ENCODE measurements at regions of chr10 and their contacts with region 1.

Region 1: GRCh38 chr10:129982825-129983224 is 18.8 kb upstream of the EBF3 start:
- H3K4me3 ChIP-seq: no peak overlapping the region
- H3K27ac ChIP-seq: no peak overlapping the region
- H3K4me1 ChIP-seq: no peaks in the 10 kb centered on the region
- CTCF ChIP-seq: no peak

Region 2: GRCh38 chr10:129915526-129916378 is 67.1 kb before region 1 on chr10:
- CTCF ChIA-PET with region 1: no interaction called
- POLR2A ChIA-PET with region 1: no interaction called
- H3K4me3 ChIP-seq: no peak overlapping the region
- H3K27ac ChIP-seq: no peak overlapping the region
- H3K4me1 ChIP-seq: peaks cover 18% of the 10 kb centered on the region
- CTCF ChIP-seq: no peak

Region 3: GRCh38 chr10:129971381-129972144 is 11.3 kb before region 1 on chr10:
- CTCF ChIA-PET with region 1: interaction called, 10 read pairs
- POLR2A ChIA-PET with region 1: no interaction called
- H3K4me3 ChIP-seq: peak overlapping the region; percentile 38
- H3K27ac ChIP-seq: no peak overlapping the region; the same call in 1 of the 2 replicates
- H3K4me1 ChIP-seq: peaks cover 10% of the 10 kb centered on the region; the same call in 1 of the 2 replicates
- CTCF ChIP-seq: peak; percentile 77

Region 4: DNA sequence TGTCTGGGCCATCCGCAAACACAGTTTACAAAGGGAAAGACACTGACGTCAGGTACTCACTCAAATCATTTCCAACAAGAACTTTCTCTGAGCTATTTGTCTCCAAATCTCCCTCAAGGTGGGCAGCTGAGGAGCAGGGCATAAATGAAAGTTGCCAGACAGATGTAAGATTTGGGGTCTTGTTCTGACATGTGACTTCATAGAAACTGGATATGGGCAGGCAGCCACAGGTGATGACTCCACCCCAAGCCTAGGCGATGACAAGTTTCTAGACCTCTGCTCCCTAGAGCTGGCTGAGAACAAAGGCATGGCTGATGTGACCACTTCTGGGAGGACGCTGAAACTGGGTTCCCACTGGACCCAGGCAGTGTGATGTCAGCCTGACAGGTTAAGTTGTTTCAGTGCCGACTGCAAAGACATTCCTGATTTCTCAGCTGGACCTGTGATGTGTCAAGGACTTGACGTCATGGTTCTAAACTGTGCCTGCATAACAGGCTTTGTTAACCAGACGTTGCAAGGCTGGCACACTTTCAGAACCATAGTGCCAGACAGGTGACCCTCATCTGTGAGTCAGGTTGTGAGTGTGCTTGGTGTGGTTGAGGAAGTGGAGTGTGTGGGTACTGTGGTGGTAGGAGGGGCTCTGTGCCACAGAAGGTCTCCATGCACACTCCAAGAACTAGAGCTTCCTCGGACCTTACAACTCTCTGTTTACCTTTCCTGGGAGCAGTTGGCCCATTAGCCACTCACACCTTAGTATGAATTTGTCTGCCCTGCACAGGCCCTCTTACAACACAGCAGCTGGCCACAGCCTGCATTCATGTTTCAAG is 21.2 kb after region 1 on chr10:
- CTCF ChIA-PET with region 1: no interaction called
- POLR2A ChIA-PET with region 1: no interaction called
- H3K4me3 ChIP-seq: no peak overlapping the region
- H3K27ac ChIP-seq: no peak overlapping the region
- H3K4me1 ChIP-seq: no peaks in the 10 kb centered on the region
- CTCF ChIP-seq: no peak